Activated CD4-positive, alpha-beta T cell treated with anti-CD3 and anti-CD28 coated beads, Interleukin-2, amount 10 ng/mL, durations not matched to agents 24 days and 14 days (primary cell): ENCODE measurements at regions of chr2 and their contacts with region 1.

Region 1: GRCh38 chr2:168717790-168718502 is 84.5 kb upstream of the NOSTRIN start:
- DNase-seq: no peak
- H3K4me3 Mint-ChIP-seq: no peak overlapping the region
- H3K27ac Mint-ChIP-seq: no peak overlapping the region
- H3K4me1 Mint-ChIP-seq: peaks cover 6% of the 10 kb centered on the region
- H3K27me3 Mint-ChIP-seq: no peaks in the 10 kb centered on the region

Region 2: DNA sequence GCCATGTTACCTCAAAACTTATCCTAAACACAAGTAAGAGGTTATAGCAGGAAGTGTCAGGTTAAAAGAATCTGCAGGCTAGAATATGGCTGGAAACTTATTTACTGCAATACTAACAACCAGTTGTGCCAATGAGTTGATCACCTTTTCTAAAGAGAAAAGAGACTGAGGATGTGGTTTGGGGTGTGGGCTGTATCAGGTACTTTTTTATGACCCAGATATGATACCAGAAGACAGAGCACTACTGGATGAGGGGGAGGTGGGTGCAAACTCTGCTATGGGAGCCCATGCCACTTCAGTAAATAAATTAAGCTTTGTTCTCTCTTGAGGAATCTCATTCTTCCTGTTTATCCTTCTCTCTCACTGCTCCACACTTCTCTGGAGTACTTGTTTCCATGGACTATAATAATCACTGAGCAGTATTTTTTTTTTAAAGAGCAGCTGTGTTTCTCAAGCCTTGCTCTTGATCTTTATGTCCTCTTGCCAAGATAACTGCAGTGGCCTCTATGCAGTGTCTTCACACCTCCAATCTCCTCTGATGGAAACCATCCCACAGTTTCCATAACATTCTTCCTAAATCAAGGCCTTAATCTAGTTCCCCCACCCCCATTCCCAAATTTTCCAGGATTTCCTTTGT is 33.3 kb after region 1 on chr2:
- intact Hi-C with region 1: loop called (anchors 5 kb)
- DNase-seq: peak; percentile 79
- H3K4me3 Mint-ChIP-seq: peak overlapping the region; percentile 14
- H3K27ac Mint-ChIP-seq: no peak overlapping the region
- H3K4me1 Mint-ChIP-seq: peaks cover 27% of the 10 kb centered on the region
- H3K27me3 Mint-ChIP-seq: no peaks in the 10 kb centered on the region